Heart right ventricle (tissue), 16 donors: ENCODE measurements at regions of chr1 and their contacts with region 1.

Region 1: DNA sequence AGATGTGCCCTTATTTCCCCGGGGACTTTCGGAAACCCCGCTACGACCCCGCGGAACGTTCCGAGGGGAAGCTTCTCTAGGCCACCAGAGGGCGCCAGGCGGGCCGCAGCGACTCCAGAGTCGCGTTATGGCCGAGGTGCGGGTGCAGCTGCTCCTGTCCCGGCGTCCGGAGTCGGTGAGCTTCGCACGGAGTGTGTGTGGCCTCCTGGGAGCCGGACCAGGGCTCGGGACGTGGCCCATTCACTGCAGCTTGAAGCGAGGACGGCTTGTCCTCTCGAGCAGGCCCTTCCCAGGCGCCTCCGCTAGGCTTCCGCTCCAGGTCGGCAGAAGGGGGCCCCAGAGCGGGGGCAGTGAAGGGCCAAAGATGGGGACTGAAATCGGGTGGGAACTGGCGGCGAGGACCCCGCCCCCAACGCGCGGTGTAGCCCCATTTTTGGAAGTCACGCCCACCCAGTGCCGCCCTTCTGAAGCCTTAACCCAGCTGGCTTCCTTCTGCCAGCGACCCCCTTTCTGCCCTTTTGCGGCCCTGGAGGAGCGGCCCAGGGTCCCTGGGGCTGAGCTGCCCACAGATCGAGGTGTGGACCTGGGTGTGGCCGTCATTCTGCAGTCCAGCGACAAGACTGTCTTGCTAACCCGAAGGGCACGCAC is at the start of gene NUDT17:
- DNase-seq: peak; percentile 77 to 83
- ATAC-seq: peak; percentile 82 to 94 (median 90)
- H3K4me3 ChIP-seq: peak within 1 kb of the TSS; percentile 14 to 69 (median 65)
- H3K27ac ChIP-seq: peak within 1 kb of the TSS in 9 of 10 donors; percentile 48 to 86 (median 81)
- H3K4me1 ChIP-seq: peaks cover 0 to 19% (median 16%) of the 10 kb centered on the region in 9 donors
- H3K27me3 ChIP-seq: no peaks in the 10 kb centered on the region
- CTCF ChIP-seq: peak; percentile 92 to 99 (median 96)
- total RNA-seq, gene NUDT17: 1.8 to 4.9 (median 3.6) TPM

Region 2: DNA sequence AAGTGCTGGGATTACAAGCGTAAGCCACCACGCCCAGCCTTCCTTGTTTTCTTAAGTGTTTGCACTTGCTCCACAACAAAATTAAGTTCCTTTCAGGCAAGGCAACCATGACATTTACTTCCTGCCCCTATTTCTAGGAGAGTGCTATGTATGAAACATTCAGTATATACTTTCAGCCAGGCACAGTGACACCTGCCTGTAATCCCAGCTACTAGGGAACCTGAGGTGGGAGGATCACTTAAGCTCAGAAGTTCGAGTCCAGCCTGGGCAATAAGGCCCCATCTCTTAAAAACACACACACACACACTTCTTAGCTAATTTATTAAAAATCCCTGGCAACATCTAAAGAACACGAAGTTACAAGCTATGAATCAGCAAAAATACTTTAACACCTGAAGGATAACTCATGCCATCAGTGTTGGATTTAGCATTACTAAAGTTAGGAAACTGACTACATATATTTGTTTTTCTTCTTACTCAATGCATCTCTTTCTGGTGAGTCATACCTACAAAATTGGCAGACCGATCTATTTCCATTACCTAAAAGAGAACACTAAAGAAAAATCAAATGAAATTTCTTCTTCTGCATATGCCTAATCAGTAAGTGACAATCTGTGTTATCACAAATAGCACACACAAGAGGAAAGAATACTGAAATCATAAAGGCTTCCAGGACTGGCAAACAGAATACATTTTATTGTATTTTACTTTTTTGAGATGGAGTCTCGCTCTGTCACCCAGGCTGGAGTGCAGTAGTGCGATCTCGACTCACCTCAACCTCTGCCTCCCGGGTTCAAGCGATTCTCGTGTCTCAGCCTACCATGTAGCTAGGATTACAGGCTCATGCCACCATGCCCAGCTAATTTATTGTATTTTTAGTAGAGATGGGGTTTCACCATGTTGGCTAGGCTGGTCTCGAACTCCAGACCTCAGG is 63.2 kb before region 1 on chr1:
- intact Hi-C with region 1: loop called in 1 of 10 experiments (anchors 10 kb)
- DNase-seq: no peak
- ATAC-seq: peak in 6 of 8 donors; percentile 18 to 50 (median 43)
- H3K4me3 ChIP-seq: peak overlapping the region in 9 of 10 donors; percentile 16 to 56 (median 40)
- H3K27ac ChIP-seq: peak overlapping the region in 9 of 10 donors; percentile 31 to 85 (median 70)
- H3K4me1 ChIP-seq: peaks cover 2 to 59% (median 34%) of the 10 kb centered on the region in 9 donors
- H3K27me3 ChIP-seq: no peaks in the 10 kb centered on the region
- CTCF ChIP-seq: no peak

Region 3: GRCh38 chr1:145891587-145892485 is 46.2 kb after region 1 on chr1:
- intact Hi-C with region 1: no loop called
- DNase-seq: peak; percentile 87 to 95
- ATAC-seq: peak; percentile 86 to 95 (median 92)
- H3K4me3 ChIP-seq: peak overlapping the region in 7 of 10 donors; percentile 2 to 28 (median 17)
- H3K27ac ChIP-seq: peak overlapping the region; percentile 67 to 93 (median 82)
- H3K4me1 ChIP-seq: peaks cover 15 to 47% (median 30%) of the 10 kb centered on the region in 9 donors
- H3K27me3 ChIP-seq: no peaks in the 10 kb centered on the region
- CTCF ChIP-seq: peak; percentile 91 to 97 (median 94)

Region 4: DNA sequence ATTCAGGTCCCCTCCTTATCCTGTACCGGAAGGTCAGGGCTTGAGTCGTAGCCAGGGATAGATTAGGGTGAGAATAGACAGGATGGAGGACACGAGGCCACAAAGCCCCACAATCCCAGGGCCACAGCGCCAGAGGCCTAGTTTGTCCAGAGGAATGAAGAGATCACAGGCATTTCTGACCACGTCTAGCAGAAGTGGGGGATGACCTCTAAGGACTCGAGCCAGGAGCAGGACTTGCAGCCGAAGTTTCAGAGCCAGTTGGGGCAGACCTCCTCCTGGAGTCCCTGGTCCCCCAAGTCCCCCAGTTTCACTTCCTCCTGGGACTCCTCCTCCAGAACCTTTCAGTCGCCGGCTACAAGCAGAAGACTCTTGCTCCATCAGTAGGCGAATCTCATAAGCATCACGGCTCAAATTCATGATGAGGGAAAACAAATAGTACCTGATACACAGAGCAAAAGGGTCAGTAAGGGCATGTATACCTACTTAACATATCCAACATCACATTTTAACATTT is 66.5 kb after region 1 on chr1:
- intact Hi-C with region 1: loop called in 4 of 10 experiments (anchors 5 to 10 kb)
- DNase-seq: no peak
- ATAC-seq: no peak
- H3K4me3 ChIP-seq: no peak overlapping the region
- H3K27ac ChIP-seq: no peak overlapping the region
- H3K4me1 ChIP-seq: peaks cover 0 to 40% (median 29%) of the 10 kb centered on the region in 9 donors
- H3K27me3 ChIP-seq: no peaks in the 10 kb centered on the region
- CTCF ChIP-seq: no peak

Region 5: DNA sequence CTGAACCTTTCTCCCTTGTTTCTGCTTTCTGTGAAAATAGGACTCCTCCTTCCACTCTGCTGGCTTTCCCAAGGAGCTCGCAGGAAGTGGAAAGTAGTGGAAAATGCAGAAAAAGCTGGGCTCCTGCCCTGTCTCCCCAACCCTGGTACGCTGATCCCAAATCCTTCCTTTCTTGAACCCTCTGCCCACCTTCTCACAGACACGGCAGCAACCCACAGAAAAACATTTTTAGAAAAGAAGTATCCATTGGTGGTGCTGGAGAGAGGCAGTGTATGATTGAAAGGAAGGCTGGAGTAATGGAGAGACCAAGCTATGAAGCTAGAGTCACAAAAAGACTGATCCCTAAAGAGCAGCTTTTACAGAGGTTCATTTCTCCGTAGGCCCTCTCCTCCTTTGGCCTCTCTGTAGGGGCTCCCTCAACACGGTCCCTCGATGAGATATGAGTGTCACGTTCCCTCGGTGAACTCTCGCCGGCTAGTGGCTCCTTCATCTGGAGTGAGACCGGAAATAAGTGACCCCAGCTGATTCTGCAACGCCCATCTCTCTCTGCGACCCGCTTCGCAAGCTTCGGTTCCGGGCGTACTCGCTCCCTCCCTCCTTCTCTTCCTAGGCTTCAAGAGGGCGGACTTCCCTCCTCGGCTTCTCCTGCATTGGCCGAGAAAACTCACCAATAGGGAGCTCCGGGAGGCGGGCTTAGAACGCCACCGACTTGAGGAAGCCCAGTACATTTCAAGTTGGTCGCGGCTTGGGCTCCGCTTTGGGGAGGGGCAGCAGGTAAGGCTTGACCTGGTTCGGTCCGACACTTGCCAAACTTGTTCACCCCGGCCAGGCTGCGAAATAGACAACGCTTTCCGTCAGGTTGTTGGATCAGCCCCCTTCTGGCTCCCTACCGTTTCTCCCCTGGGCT is 118.6 kb after region 1 on chr1 and contains the starts of genes ANKRD34A and POLR3GL:
- intact Hi-C with region 1: loop called in 1 of 10 experiments (anchors 5 kb)
- DNase-seq: peak; percentile 93 to 98
- ATAC-seq: peak; percentile 79 to 90 (median 85)
- H3K4me3 ChIP-seq: peak within 1 kb of the TSS; percentile 50 to 74 (median 65)
- H3K27ac ChIP-seq: peak within 1 kb of the TSS; percentile 62 to 96 (median 91)
- H3K4me1 ChIP-seq: peaks cover 14 to 59% (median 49%) of the 10 kb centered on the region in 9 donors
- H3K27me3 ChIP-seq: peaks cover 0 to 9% (median 0%) of the 10 kb centered on the region in 7 donors
- CTCF ChIP-seq: no peak
- total RNA-seq, gene ANKRD34A: 0.66 to 1.5 (median 1.0) TPM
- total RNA-seq, gene POLR3GL: 30.9 to 44.7 (median 38.5) TPM

Region 6: DNA sequence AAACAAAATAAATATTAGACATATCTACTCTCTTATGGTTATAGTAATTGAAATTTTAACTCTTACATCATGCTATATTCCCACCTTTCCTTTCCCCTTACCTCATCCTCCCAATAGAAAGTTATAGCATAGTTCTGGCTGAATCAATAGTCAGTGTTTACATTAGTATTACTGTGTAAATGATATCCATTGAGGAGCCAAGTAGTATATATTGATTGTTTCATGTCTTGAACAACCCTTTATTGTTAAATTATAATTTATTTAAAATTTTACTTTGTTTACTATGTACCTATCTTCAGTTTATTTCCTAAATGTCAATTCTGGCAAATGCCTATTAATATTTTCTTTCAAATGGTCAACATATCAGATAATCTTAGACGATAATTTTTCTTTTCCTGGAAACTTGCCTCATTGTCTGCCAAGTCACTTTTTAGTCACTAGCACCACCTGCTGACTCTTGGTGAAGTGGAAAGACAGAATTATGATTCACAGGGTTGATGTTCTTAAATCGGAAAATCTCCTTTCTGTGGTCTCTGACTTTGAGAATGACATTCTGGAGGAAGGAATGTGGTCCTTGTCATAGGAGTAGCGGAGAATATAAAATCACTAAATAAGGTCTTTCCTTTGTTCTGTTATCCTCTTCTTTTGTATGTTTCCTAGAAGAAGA is 167.2 kb after region 1 on chr1:
- intact Hi-C with region 1: loop called (anchors 2 to 10 kb)
- DNase-seq: peak in 1 of 2 donors; percentile 60
- ATAC-seq: peak in 4 of 8 donors; percentile 40 to 59 (median 45)
- H3K4me3 ChIP-seq: no peak overlapping the region
- H3K27ac ChIP-seq: no peak overlapping the region
- H3K4me1 ChIP-seq: peaks cover 0 to 28% (median 14%) of the 10 kb centered on the region in 9 donors
- H3K27me3 ChIP-seq: peaks cover 0 to 2% (median 0%) of the 10 kb centered on the region in 7 donors
- CTCF ChIP-seq: peak; percentile 53 to 93 (median 81)